ENCODE measurements at regions of chr18 and their contacts with region 1.

Region 1: GRCh38 chr18:45212181-45213039 is 402.9 kb upstream of the SLC14A2 start:
- DNase-seq: peak; percentile 76
- H3K4me3 ChIP-seq: no peak overlapping the region
- H3K27ac ChIP-seq: no peak overlapping the region
- H3K4me1 ChIP-seq: no peaks in the 10 kb centered on the region
- H3K27me3 ChIP-seq: no peaks in the 10 kb centered on the region
- CTCF ChIP-seq: peak; percentile 91 to 99
- POLR2A ChIP-seq: no peak

Region 2: GRCh38 chr18:43620936-43621335 is 1591.5 kb before region 1 on chr18:
- CTCF ChIA-PET with region 1: interaction called, 27 read pairs
- POLR2A ChIA-PET with region 1: no interaction called
- dilution Hi-C with region 1: no loop called
- intact Hi-C with region 1: loop called (anchors 1 kb)
- DNase-seq: peak; percentile 41
- H3K4me3 ChIP-seq: no peak overlapping the region
- H3K27ac ChIP-seq: no peak overlapping the region
- H3K4me1 ChIP-seq: no peaks in the 10 kb centered on the region
- H3K27me3 ChIP-seq: no peaks in the 10 kb centered on the region
- CTCF ChIP-seq: peak in 1 of 2 donors; percentile 17
- POLR2A ChIP-seq: no peak

Region 3: GRCh38 chr18:44130376-44130942 is 1082.0 kb before region 1 on chr18:
- CTCF ChIA-PET with region 1: interaction called, 15 read pairs
- POLR2A ChIA-PET with region 1: no interaction called
- dilution Hi-C with region 1: no loop called
- intact Hi-C with region 1: loop called (anchors 1 kb)
- DNase-seq: peak; percentile 69
- H3K4me3 ChIP-seq: no peak overlapping the region
- H3K27ac ChIP-seq: no peak overlapping the region
- H3K4me1 ChIP-seq: peaks cover 11% of the 10 kb centered on the region
- H3K27me3 ChIP-seq: no peaks in the 10 kb centered on the region
- CTCF ChIP-seq: peak; percentile 59 to 66
- POLR2A ChIP-seq: no peak

Region 4: GRCh38 chr18:44579028-44579702 is 633.2 kb before region 1 on chr18:
- CTCF ChIA-PET with region 1: no interaction called
- POLR2A ChIA-PET with region 1: no interaction called
- dilution Hi-C with region 1: no loop called
- intact Hi-C with region 1: loop called (anchors 5 kb)
- DNase-seq: no peak
- H3K4me3 ChIP-seq: no peak overlapping the region
- H3K27ac ChIP-seq: no peak overlapping the region
- H3K4me1 ChIP-seq: no peaks in the 10 kb centered on the region
- H3K27me3 ChIP-seq: no peaks in the 10 kb centered on the region
- CTCF ChIP-seq: peak; percentile 42 to 43
- POLR2A ChIP-seq: no peak

Region 5: GRCh38 chr18:45110577-45111501 is 101.6 kb before region 1 on chr18:
- CTCF ChIA-PET with region 1: no interaction called
- POLR2A ChIA-PET with region 1: no interaction called
- dilution Hi-C with region 1: no loop called
- intact Hi-C with region 1: no loop called
- DNase-seq: no peak
- H3K4me3 ChIP-seq: no peak overlapping the region
- H3K27ac ChIP-seq: no peak overlapping the region
- H3K4me1 ChIP-seq: no peaks in the 10 kb centered on the region
- H3K27me3 ChIP-seq: no peaks in the 10 kb centered on the region
- CTCF ChIP-seq: no peak
- POLR2A ChIP-seq: no peak

Region 6: GRCh38 chr18:45384137-45384961 is 171.9 kb after region 1 on chr18:
- CTCF ChIA-PET with region 1: no interaction called
- POLR2A ChIA-PET with region 1: no interaction called
- dilution Hi-C with region 1: no loop called
- intact Hi-C with region 1: loop called (anchors 1 kb)
- DNase-seq: peak; percentile 45
- H3K4me3 ChIP-seq: no peak overlapping the region
- H3K27ac ChIP-seq: no peak overlapping the region
- H3K4me1 ChIP-seq: no peaks in the 10 kb centered on the region
- H3K27me3 ChIP-seq: no peaks in the 10 kb centered on the region
- CTCF ChIP-seq: peak; percentile 42 to 60
- POLR2A ChIP-seq: no peak